H1 (cell line): ENCODE measurements at regions of chr7 and their contacts with region 1.

Region 1: DNA sequence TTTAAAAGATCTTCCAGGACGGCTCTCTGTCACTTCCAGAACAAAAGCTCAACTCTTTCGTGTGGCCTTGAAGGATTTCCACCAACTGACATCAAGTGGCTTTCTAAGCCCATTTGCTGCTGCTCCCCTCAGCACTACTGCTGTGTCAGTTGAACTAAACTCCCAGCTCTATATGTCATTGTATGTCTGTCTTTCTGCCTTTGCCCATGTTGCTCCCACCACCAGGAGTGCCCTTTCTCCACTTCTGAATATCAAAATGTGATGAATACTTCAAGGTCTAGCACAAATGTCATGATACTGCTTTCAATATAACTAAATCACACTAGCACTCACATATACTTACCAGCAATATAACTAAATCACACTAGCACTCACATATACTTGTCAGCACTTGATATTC is 138.3 kb downstream of the ATXN7L1 start:
- DNase-seq: no peak
- H3K4me3 ChIP-seq: no peak overlapping the region
- H3K27ac ChIP-seq: no peak overlapping the region
- H3K4me1 ChIP-seq: peaks cover 0 to 3% (median 0%) of the 10 kb centered on the region in 4 experiments; a peak in 1 of 7 replicates
- H3K27me3 ChIP-seq: no peaks in the 10 kb centered on the region
- CTCF ChIP-seq: peak in 1 of 3 experiments; percentile 27; a peak in 1 of 4 replicates
- EP300 ChIP-seq: no peak
- POLR2A ChIP-seq: no peak
- RAD21 ChIP-seq: peak in 1 of 2 experiments; percentile 23; a peak in 1 of 4 replicates

Region 2: GRCh38 chr7:105697753-105698152 is 40.4 kb before region 1 on chr7:
- CTCF ChIA-PET with region 1: no interaction called
- POLR2A ChIA-PET with region 1: no interaction called
- DNase-seq: no peak
- H3K4me3 ChIP-seq: no peak overlapping the region
- H3K27ac ChIP-seq: peak overlapping the region; percentile 75; the same call in 1 of the 2 replicates
- H3K4me1 ChIP-seq: peaks cover 14 to 25% (median 18%) of the 10 kb centered on the region in 4 experiments
- H3K27me3 ChIP-seq: no peaks in the 10 kb centered on the region
- CTCF ChIP-seq: no peak
- EP300 ChIP-seq: no peak
- POLR2A ChIP-seq: no peak
- RAD21 ChIP-seq: no peak

Region 3: GRCh38 chr7:105721327-105722104 is 16.6 kb before region 1 on chr7:
- CTCF ChIA-PET with region 1: interaction called, 10 read pairs
- POLR2A ChIA-PET with region 1: interaction called, 6 read pairs
- DNase-seq: peak in 1 of 2 experiments; percentile 19
- H3K4me3 ChIP-seq: no peak overlapping the region
- H3K27ac ChIP-seq: no peak overlapping the region
- H3K4me1 ChIP-seq: peaks cover 15 to 22% (median 17%) of the 10 kb centered on the region in 4 experiments
- H3K27me3 ChIP-seq: no peaks in the 10 kb centered on the region
- CTCF ChIP-seq: no peak
- EP300 ChIP-seq: no peak; a peak in 1 of 3 replicates
- POLR2A ChIP-seq: no peak
- RAD21 ChIP-seq: peak in 1 of 2 experiments; percentile 21; a peak in 1 of 4 replicates

Region 4: DNA sequence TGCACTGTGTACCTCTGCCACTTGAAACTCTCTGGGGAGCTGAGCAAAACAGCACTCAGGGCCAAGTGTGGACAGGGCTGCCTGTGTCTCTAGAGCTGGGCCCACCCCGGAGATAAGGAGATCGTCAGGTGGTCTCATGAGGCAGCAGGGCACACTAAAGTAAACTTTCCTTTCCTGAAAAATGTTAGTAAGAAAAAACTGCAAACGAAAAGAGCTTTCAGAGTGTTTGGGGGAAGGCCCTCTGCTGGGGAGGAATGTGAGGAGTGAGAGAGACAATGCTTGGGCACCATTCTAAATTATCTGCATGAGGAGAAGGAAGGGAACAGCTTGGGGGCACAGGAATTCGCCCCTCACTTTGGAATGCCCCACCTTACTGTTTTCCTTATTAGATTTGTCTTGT is 10.6 kb after region 1 on chr7:
- CTCF ChIA-PET with region 1: interaction called, 28 read pairs
- POLR2A ChIA-PET with region 1: interaction called, 4 read pairs
- DNase-seq: no peak
- H3K4me3 ChIP-seq: no peak overlapping the region
- H3K27ac ChIP-seq: peak overlapping the region; percentile 49; the same call in 1 of the 2 replicates
- H3K4me1 ChIP-seq: peaks cover 0 to 13% (median 6%) of the 10 kb centered on the region in 4 experiments; a peak in 6 of 7 replicates
- H3K27me3 ChIP-seq: no peaks in the 10 kb centered on the region
- CTCF ChIP-seq: peak in 1 of 3 experiments; percentile 22; a peak in 1 of 4 replicates
- EP300 ChIP-seq: no peak
- POLR2A ChIP-seq: no peak
- RAD21 ChIP-seq: peak; percentile 24 to 44; a peak in 3 of 4 replicates

Region 5: GRCh38 chr7:105972276-105972675 is 234.1 kb after region 1 on chr7:
- CTCF ChIA-PET with region 1: no interaction called
- POLR2A ChIA-PET with region 1: no interaction called
- DNase-seq: no peak
- H3K4me3 ChIP-seq: no peak overlapping the region
- H3K27ac ChIP-seq: no peak overlapping the region
- H3K4me1 ChIP-seq: peaks cover 0 to 10% (median 4%) of the 10 kb centered on the region in 4 experiments; a peak in 3 of 7 replicates
- H3K27me3 ChIP-seq: no peaks in the 10 kb centered on the region
- CTCF ChIP-seq: no peak
- EP300 ChIP-seq: no peak
- POLR2A ChIP-seq: no peak
- RAD21 ChIP-seq: no peak